ENCODE measurements at regions of chr17 and their contacts with region 1.

Region 1: DNA sequence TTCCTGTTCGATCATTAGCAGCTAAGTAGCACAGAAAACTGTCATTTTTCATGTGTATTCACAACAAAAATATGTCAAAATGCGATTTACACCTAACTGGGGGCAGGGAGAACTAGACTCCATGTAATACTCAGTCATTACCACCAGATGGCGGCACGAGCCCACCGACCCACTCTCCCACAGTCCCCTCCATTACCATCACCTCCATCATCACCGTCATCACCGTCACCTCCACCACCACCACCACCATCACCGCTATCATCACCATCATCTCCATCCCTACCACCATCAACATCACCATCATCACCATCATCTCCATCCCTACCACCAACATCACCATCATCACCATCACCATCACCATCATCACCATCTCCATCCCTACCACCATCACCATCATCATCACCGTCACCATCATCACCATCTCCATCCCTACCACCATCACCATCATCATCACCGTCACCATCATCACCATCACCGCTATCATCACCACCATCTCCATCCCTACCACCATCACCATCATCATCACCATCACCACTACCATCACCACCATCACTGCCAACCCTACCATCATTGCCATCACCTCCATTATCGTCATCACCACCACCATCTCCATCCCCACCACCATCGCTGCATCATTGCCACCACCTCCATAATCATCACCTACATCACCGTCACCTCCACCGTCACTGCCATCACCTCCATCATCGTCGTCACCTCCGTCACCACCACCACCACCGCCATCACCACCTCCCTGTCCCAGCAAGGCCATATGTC is 14.4 kb downstream of the NDUFAF8 start:
- DNase-seq: peak in 1 of 2 donors; percentile 28
- ATAC-seq: peak; percentile 21 to 22
- H3K4me3 ChIP-seq: no peak overlapping the region
- H3K27ac ChIP-seq: no peak overlapping the region
- H3K4me1 ChIP-seq: peaks cover 17 to 19% of the 10 kb centered on the region in 2 donors
- H3K27me3 ChIP-seq: no peaks in the 10 kb centered on the region
- CTCF ChIP-seq: peak; percentile 82 to 92 (median 87)
- POLR2A ChIP-seq: no peak

Region 2: GRCh38 chr17:81537343-81537855 is 283.9 kb after region 1 on chr17:
- in situ Hi-C with region 1: no loop called
- intact Hi-C with region 1: loop called (anchors 1 kb)
- DNase-seq: peak in 1 of 2 donors; percentile 43
- ATAC-seq: peak; percentile 42 to 72
- H3K4me3 ChIP-seq: no peak overlapping the region
- H3K27ac ChIP-seq: no peak overlapping the region
- H3K4me1 ChIP-seq: peaks cover 10 to 14% of the 10 kb centered on the region in 2 donors
- H3K27me3 ChIP-seq: peaks cover 27 to 35% (median 28%) of the 10 kb centered on the region in 3 donors
- CTCF ChIP-seq: peak; percentile 84 to 95 (median 92)
- POLR2A ChIP-seq: no peak

Region 3: DNA sequence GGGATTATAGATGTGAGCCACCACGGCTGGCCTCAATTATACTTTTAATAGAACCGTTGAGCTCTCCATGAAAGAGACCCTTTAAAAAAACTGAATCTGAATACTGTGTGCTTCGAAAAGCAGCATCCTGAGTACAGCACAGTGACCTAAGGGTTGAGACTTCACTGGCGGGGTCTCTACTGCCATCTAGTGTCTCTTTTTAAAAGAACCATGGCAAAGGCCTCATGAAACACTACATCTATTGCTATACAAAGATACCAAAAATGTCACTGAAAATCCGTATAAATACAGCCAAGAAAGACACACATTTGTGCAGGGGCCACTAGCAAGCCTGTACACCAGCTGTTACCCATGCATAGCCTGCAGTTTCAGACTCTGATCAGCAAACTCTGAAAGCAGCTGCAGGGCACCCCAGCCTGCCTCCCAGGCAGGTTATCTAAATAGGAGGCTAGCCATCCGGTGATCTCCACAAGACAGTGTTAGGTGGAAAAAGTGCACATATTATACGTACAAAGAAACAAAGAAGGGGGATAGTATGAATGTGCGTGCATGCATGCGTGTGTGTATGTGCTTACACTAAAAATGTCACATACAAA is 348.1 kb after region 1 on chr17:
- in situ Hi-C with region 1: loop called in 1 of 4 experiments (anchors 25 kb)
- intact Hi-C with region 1: loop called (anchors 5 kb)
- DNase-seq: no peak
- ATAC-seq: peak; percentile 61 to 85
- H3K4me3 ChIP-seq: no peak overlapping the region
- H3K27ac ChIP-seq: no peak overlapping the region
- H3K4me1 ChIP-seq: no peaks in the 10 kb centered on the region
- H3K27me3 ChIP-seq: no peaks in the 10 kb centered on the region
- CTCF ChIP-seq: peak; percentile 34 to 81 (median 66)
- POLR2A ChIP-seq: no peak

Measured in gastrocnemius medialis (tissue), 4 donors.